ENCODE measurements at regions of chr6 and their contacts with region 1.

Region 1: DNA sequence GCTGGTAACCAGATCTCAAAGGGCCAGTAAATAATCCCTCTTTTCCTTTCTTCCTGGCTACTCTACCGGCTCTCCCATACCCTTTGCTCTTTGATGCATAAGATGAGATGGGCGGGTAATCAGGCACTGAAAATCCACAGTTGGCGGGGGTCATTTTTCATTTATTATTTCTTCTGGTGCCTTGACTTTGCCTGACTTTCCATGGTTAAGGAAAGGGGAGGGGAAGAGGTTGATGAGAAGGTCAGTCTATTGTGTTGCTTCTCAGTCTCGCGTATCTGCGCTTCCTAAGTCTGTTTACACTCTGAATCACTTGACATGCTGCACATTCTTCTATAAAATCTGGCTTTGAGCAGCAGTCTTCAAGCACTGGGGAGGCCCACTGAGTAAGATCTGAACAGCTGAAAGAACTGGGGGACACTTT is 121.1 kb upstream of the HDGFL1 start:
- DNase-seq: no peak

Region 2: DNA sequence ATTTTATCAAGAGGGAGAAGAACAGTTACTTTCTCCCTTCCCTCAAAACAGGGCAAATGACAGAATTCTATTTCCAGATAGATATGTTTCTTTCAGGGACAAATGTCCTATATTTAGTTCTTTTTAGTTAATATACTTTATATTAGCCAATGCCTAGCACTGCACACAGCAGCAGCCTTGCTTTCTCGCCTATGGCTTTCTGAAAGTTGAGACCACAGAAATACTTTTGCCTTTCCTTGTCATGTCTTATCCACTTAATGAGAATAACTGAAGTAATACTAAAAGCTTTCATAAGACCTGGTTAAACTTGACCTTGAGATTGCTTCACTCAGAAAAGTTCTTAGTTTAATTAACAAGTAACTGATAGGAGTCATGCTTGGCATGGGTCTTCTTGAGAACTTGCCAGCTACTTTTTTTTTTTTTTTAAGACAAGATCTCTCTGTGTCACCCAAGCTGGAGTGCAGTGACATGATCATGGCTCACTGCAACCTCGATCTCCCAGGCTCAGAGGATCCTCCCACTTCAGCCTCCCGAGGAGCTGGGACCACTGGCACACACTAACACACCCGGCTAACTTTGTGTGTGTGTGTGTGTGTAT is 1754.7 kb before region 1 on chr6:
- intact Hi-C with region 1: loop called in 1 of 2 experiments (anchors 5 kb)
- DNase-seq: no peak

Region 3: DNA sequence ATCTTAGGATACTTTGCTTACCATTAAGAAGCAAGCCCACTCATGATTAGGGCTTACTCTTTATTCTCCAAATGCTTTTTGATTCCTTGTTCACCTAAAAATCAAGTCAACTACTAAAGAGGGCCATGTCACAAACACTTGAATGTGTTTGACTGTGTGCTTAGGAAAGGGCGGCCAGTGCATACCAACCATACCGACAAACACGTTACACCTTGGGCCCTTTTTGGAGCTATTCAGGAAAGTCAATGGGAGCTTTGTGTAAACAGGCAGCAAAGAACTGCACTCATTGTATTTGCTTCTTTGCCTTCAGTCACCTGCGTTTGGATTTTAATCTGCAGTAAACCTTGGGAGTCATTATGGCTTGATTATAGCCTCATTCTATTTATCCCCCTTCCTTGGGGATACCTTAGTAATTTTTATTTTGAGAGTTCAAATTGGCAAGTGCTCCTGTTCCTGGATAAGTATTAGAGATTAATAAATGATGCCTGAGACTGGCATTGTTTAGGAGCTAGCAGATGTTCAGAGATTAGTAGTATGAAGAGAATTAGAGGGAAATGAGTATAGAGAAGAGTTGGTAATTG is 18.5 kb after region 1 on chr6:
- intact Hi-C with region 1: no loop called
- DNase-seq: no peak

Region 4: DNA sequence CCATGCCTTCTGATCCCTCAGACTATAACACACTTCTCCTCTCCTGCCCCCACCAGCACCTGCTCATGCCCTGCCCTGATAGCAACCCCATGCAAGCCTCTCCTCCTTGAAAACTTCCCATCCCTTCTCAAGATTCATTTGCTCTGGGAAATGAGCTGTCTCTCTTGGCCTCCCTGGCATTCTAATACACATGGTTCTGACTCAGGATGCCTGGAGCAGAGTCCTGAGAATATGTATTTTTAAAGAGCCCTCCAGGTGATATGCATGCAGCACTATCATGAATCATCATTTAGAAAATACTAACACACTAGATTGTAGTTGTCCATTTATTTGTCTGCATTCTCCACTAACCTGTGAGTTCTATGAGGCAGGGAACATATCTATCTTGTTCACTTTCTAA is 147.7 kb after region 1 on chr6:
- intact Hi-C with region 1: no loop called
- DNase-seq: no peak

Measured in posterior vena cava (tissue), 2 donors.